Caco-2 (cell line): ENCODE measurements at regions of chr14 and their contacts with region 1.

Region 1: DNA sequence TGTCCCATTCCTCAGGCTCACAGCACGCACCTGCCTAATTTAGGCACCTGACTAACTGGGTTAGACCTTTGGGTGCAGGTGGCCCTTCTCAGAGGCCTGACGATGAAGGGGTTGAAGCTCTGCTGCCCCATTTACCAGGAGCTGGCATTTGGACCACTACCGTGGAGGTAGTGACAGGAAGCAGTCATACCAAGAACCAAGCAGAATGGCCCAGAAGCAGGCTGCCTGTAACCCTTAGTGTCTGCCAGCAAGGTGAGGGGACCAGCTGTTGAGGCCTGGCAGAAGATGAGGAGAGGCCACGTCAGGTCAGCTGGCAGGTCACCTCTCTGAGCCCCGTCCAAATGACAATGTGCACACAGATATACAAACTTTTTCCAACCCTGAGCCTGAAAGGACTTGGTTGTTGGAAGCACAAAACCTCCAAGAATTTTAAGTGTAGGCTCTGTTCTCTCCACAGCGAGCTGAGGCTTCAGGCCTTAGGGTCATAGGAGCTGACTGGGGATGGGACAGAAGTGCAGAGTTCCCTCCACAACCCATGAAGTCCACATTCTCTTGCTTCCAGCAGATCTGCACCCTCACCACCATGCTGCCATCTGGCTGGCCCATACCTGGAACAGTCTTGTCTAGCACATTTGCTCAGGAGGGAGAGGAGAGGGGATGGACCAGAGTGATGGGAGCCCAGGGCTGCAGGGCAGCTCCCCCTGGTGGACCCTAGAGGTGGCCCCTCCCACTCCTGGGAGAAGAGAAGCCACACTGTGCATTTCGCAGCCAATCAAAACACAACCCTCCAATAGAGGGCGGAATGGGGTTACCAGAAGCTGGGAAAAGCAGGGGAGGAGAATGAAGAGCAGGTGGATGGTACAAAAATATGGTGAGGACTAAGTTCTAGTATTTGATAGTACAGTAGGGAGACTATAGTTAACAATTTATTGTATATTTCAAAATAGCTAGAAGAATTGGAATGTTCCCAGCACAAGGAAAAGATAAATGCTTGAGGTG is 23.3 kb downstream of the VASH1 start:
- DNase-seq: peak; percentile 81 to 88
- H3K4me3 ChIP-seq: no peak overlapping the region
- H3K4me3 Mint-ChIP-seq: no peak overlapping the region
- H3K27ac Mint-ChIP-seq: no peak overlapping the region
- H3K4me1 ChIP-seq: no peaks in the 10 kb centered on the region
- H3K4me1 Mint-ChIP-seq: no peaks in the 10 kb centered on the region
- H3K27me3 ChIP-seq: no peaks in the 10 kb centered on the region
- H3K27me3 Mint-ChIP-seq: no peaks in the 10 kb centered on the region
- CTCF ChIP-seq: peak; percentile 84 to 95

Region 2: GRCh38 chr14:76710056-76711010 is 74.2 kb before region 1 on chr14:
- CTCF ChIA-PET with region 1: interaction called, 21 read pairs
- POLR2A ChIA-PET with region 1: no interaction called
- intact Hi-C with region 1: loop called (anchors 1 kb)
- DNase-seq: peak in 1 of 2 experiments; percentile 26
- H3K4me3 ChIP-seq: no peak overlapping the region
- H3K4me3 Mint-ChIP-seq: no peak overlapping the region
- H3K27ac Mint-ChIP-seq: no peak overlapping the region
- H3K4me1 ChIP-seq: no peaks in the 10 kb centered on the region
- H3K4me1 Mint-ChIP-seq: no peaks in the 10 kb centered on the region
- H3K27me3 ChIP-seq: no peaks in the 10 kb centered on the region
- H3K27me3 Mint-ChIP-seq: peaks cover 9% of the 10 kb centered on the region
- CTCF ChIP-seq: peak; percentile 40 to 75

Region 3: GRCh38 chr14:76937181-76938091 is 152.9 kb after region 1 on chr14:
- CTCF ChIA-PET with region 1: no interaction called
- POLR2A ChIA-PET with region 1: no interaction called
- intact Hi-C with region 1: no loop called
- DNase-seq: no peak
- H3K4me3 ChIP-seq: no peak overlapping the region
- H3K4me3 Mint-ChIP-seq: no peak overlapping the region
- H3K27ac Mint-ChIP-seq: no peak overlapping the region
- H3K4me1 ChIP-seq: no peaks in the 10 kb centered on the region
- H3K4me1 Mint-ChIP-seq: no peaks in the 10 kb centered on the region
- H3K27me3 ChIP-seq: no peaks in the 10 kb centered on the region
- H3K27me3 Mint-ChIP-seq: no peaks in the 10 kb centered on the region
- CTCF ChIP-seq: no peak